Psoas muscle (tissue), 8 donors: ENCODE measurements at regions of chr7 and their contacts with region 1.

Region 1: GRCh38 chr7:111089822-111090426 is 1.0 kb upstream of the LRRN3 start:
- DNase-seq: no peak
- ATAC-seq: peak; percentile 70 to 89 (median 79)
- H3K4me3 ChIP-seq: no peak overlapping the region
- H3K27ac ChIP-seq: no peak overlapping the region
- H3K4me1 ChIP-seq: peaks cover 21% of the 10 kb centered on the region
- H3K27me3 ChIP-seq: no peaks in the 10 kb centered on the region
- CTCF ChIP-seq: peak; percentile 84

Region 2: DNA sequence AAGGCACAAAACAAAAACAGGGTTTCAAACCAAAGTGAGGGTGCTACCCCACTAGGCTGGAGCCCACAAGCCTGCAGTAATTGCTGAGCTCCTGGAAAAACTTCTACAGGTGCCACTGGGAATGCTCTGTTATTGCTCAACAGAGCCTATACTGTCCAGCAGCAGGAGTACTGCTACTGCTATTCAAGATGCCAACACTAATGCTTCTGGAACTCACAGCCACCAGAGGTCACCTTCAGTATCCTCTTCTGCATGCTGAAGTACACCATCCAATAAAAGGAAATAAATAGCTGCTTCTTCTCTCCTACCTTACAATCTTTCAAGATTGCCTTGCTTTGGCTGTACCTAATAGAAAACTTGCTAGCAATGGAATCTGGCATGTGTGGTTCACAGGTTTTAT is 223.0 kb after region 1 on chr7:
- intact Hi-C with region 1: no loop called
- DNase-seq: no peak
- ATAC-seq: peak in 2 of 4 donors; percentile 42 to 62
- H3K4me3 ChIP-seq: no peak overlapping the region
- H3K27ac ChIP-seq: no peak overlapping the region
- H3K4me1 ChIP-seq: no peaks in the 10 kb centered on the region
- H3K27me3 ChIP-seq: no peaks in the 10 kb centered on the region
- CTCF ChIP-seq: no peak

Region 3: DNA sequence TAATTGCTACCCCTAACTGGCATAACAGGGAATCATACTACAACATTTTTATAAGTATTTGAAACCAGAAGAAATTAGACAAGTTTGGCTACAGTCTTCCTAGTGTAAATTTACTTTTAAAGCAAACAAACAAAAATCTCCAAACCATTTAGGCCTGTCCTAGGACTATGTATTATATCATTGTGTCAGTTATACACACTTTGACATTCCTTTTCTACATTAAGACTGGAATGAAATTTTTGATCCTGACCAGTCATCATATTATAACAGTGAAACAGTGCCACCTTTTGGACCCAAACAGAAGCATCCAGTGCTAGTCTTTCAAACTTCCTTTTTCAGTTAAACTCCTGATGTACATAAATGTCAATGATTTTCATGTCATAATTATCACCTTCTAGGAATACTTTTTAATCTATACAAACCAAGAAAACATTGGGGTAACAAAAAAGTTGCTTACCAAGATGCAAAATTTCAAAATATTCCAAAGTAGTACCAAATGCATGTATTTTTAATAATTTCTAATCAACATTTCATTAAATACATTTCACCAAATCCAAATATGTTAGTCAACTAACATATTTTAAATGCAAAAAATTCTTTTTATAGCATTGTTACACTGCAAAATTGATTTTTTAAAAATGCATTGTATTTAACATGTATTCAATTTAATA is 396.7 kb after region 1 on chr7:
- intact Hi-C with region 1: loop called (anchors 2 to 5 kb)
- DNase-seq: no peak
- ATAC-seq: peak in 3 of 4 donors; percentile 54 to 81 (median 66)
- H3K4me3 ChIP-seq: no peak overlapping the region
- H3K27ac ChIP-seq: no peak overlapping the region
- H3K4me1 ChIP-seq: no peaks in the 10 kb centered on the region
- H3K27me3 ChIP-seq: no peaks in the 10 kb centered on the region
- CTCF ChIP-seq: peak; percentile 74

Region 4: DNA sequence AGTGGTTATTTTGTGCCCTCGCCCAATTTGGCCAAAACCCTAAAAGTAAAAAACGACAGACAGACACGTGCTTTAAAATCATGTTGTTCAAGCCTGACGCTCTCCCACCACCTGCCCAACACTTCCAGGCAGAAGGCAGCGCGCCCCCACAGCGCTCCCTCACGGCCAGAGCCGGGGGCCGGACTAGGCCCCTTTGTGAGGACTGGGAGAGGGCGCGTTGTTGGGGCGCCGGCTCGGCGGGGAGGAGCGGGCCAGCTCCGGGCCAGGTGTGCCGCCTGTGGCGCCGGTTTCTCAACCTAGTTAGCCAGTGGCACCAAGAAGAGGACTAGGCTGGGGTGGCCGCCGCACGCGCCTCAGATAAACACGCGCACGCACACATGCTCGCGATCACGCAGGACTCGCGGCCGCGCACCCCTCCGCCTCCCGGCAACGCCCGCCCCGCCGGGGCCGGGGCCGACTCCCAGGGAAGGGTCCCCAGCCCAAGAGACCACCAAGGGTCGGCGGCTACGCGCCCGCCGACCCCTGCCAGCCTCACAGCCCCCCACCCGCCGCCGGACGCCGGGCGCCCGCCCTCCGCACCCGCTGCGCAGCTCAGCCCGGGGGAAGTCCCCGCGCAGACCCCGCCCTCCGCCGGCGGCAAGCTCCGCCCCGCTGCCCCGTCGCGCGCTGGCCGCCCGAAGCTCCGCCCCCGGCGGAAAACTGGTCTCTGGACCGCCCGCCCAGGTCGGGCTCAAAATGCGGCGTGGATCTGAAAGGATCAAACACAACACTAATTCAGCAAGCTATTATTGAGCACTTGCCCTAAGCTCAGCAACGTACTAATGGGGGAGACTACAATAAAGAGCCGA is 472.2 kb after region 1 on chr7 and contains the start of gene IMMP2L:
- intact Hi-C with region 1: loop called in 1 of 2 experiments (anchors 5 kb)
- DNase-seq: peak; percentile 90 to 95
- ATAC-seq: peak; percentile 97 to 98 (median 97)
- H3K4me3 ChIP-seq: peak within 1 kb of the TSS; percentile 93
- H3K27ac ChIP-seq: peak within 1 kb of the TSS; percentile 96
- H3K4me1 ChIP-seq: peaks cover 5% of the 10 kb centered on the region
- H3K27me3 ChIP-seq: no peaks in the 10 kb centered on the region
- CTCF ChIP-seq: peak; percentile 38
- total RNA-seq, gene IMMP2L: 19.2 to 43.0 (median 30.2) TPM

Region 5: GRCh38 chr7:111730476-111731300 is 640.8 kb after region 1 on chr7:
- intact Hi-C with region 1: loop called (anchors 5 kb)
- DNase-seq: no peak
- ATAC-seq: peak in 2 of 4 donors; percentile 32 to 57
- H3K4me3 ChIP-seq: no peak overlapping the region
- H3K27ac ChIP-seq: no peak overlapping the region
- H3K4me1 ChIP-seq: peaks cover 3% of the 10 kb centered on the region
- H3K27me3 ChIP-seq: no peaks in the 10 kb centered on the region
- CTCF ChIP-seq: peak; percentile 25